Colonic mucosa (tissue), 4 donors: ENCODE measurements at regions of chr2 and their contacts with region 1.

Region 1: DNA sequence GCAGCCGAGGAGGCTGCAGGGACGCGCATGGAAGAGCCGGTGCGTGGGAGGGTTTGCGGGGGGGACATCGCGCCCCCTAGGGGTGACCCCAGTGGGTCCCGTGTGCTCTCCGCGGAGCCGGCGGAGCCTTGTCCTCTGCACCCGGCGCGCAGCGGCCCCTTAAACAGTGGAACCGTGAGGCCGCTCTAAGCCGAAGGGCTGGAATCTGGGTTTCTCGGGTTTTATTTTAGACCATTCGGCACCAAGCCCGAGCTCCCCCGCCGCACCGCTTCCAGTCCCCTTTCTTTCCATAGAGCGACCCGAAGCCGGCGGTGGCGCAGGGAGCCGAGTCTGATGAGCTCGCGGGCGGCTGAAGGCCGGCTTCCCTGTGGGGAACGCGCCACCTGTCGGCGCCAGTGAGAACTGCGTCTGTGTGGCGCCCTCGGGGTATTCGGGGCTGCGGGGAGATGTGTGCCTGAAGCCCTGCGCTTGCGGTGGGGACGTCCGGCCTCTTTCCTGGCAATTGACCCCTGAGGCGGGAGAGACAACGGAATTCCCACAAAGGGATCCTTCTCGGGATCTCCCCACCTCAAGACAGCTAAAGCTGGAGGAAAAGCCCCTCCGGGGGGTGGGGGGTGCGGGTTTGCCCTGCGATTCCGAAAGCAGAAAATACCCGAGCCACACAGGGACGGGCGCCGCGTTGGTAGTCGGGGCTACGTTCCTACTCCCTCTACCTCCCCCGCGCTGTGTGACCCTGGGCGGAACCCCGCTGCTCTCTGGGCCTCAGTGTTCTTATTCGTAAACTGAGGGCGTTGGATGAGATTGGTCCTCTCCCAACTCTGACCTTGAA is 8.2 kb upstream of the EN1 start:
- DNase-seq: peak; percentile 85
- H3K4me3 ChIP-seq: peak overlapping the region; percentile 26
- H3K27ac ChIP-seq: no peak overlapping the region
- H3K4me1 ChIP-seq: peaks cover 8% of the 10 kb centered on the region
- H3K27me3 ChIP-seq: peaks cover 92% of the 10 kb centered on the region
- CTCF ChIP-seq: peak; percentile 96

Region 2: GRCh38 chr2:118046634-118047210 is 808.9 kb before region 1 on chr2:
- intact Hi-C with region 1: loop called (anchors 5 kb)
- DNase-seq: no peak
- H3K4me3 ChIP-seq: no peak overlapping the region
- H3K27ac ChIP-seq: no peak overlapping the region
- H3K4me1 ChIP-seq: no peaks in the 10 kb centered on the region
- H3K27me3 ChIP-seq: no peaks in the 10 kb centered on the region
- CTCF ChIP-seq: peak; percentile 36

Region 3: DNA sequence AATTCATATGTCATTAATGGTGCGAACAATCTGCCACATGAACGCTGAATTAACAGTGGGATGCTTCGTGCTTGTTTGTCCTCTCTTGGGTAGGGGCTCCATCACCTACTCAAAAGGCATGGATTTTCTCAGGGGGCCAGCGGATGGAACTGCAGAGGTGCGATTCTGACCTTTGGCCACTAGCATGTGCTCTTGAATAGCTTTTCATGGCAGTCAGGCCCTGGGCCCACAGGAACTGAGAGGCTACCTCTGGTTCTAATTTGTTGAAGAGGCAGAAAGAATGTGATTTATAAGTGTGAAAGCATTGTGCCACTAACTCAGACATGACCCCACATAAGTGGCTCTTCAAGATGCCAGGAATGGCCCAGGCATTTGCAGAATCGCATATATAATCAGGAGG is 484.1 kb before region 1 on chr2:
- intact Hi-C with region 1: loop called (anchors 5 kb)
- DNase-seq: no peak
- H3K4me3 ChIP-seq: no peak overlapping the region
- H3K27ac ChIP-seq: no peak overlapping the region
- H3K4me1 ChIP-seq: no peaks in the 10 kb centered on the region
- H3K27me3 ChIP-seq: no peaks in the 10 kb centered on the region
- CTCF ChIP-seq: peak; percentile 40

Region 4: GRCh38 chr2:118443596-118443995 is 412.1 kb before region 1 on chr2:
- intact Hi-C with region 1: no loop called
- DNase-seq: no peak
- H3K4me3 ChIP-seq: no peak overlapping the region
- H3K27ac ChIP-seq: no peak overlapping the region
- H3K4me1 ChIP-seq: no peaks in the 10 kb centered on the region
- H3K27me3 ChIP-seq: no peaks in the 10 kb centered on the region
- CTCF ChIP-seq: no peak

Region 5: DNA sequence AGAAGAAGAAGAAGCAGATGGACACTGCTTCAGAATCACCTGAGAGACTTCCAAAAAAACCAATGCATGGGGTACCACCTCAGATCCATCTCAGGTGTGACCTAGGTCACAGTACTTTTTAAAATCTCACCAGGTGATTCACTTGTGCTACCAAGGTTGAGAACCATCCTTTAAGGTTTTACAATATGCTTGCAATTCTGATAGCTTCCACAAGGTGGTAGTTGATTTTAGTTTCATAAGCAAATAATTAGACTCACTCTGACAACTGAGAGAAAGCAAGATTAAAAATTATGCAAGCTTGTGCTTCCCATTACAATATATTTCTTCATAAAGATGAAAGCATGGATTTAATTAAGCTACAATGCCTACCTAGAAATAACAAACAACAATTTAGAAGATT is 363.3 kb before region 1 on chr2:
- intact Hi-C with region 1: loop called (anchors 10 kb)
- DNase-seq: no peak
- H3K4me3 ChIP-seq: no peak overlapping the region
- H3K27ac ChIP-seq: no peak overlapping the region
- H3K4me1 ChIP-seq: no peaks in the 10 kb centered on the region
- H3K27me3 ChIP-seq: no peaks in the 10 kb centered on the region
- CTCF ChIP-seq: no peak